ENCODE measurements at regions of chr2 and their contacts with region 1.

Region 1: GRCh38 chr2:202172439-202173211 is 65.8 kb downstream of the SUMO1 start:
- DNase-seq: no peak
- ATAC-seq: no peak
- H3K4me3 ChIP-seq: no peak overlapping the region
- H3K27ac ChIP-seq: no peak overlapping the region
- H3K4me1 ChIP-seq: no peaks in the 10 kb centered on the region
- H3K27me3 ChIP-seq: no peaks in the 10 kb centered on the region

Region 2: DNA sequence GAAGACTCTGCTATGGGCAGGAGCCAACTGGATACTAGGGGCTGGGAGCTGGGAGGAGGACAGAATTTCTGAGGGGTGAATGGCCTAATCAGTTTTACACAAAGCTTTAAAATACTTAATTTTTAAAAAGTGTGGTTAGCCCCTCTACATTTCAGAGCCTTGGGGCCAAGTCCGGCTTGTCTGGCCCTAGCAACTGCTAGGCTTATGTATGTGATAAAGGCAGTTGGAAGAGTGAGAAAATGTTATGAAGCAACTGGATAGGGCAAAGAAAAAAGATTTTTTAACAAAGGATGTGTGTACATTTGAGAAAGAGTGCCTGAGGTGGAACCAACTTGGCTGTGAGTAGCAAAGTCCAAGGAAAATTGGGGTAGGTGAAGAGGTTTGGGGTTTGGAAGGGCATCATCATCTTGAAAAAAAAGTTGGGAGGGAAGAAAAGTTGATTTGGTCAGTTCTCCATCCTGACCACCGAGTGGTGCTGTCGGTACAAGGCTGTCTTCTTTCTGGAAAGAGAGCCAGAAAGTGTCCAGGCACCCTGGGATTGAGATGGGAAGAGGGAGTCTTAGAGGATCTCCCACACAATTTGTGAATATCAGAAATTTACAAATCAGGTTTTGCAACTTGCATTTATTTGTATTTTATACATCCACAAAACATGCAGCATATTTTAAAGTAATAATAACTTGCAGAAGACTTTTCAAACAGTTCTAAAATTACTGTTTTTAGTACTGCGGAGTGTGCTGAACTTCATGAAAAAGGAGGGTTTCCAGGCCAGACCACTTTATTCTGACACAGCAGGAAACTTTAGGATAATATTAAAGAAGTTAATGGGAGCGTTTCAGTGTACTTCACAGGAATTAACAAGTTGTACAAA is 376.8 kb before region 1 on chr2:
- intact Hi-C with region 1: loop called in 3 of 4 experiments (anchors 5 to 10 kb)
- DNase-seq: peak in 1 of 3 donors; percentile 37
- ATAC-seq: peak; percentile 40 to 51
- H3K4me3 ChIP-seq: no peak overlapping the region
- H3K27ac ChIP-seq: no peak overlapping the region
- H3K4me1 ChIP-seq: no peaks in the 10 kb centered on the region
- H3K27me3 ChIP-seq: no peaks in the 10 kb centered on the region

Region 3: DNA sequence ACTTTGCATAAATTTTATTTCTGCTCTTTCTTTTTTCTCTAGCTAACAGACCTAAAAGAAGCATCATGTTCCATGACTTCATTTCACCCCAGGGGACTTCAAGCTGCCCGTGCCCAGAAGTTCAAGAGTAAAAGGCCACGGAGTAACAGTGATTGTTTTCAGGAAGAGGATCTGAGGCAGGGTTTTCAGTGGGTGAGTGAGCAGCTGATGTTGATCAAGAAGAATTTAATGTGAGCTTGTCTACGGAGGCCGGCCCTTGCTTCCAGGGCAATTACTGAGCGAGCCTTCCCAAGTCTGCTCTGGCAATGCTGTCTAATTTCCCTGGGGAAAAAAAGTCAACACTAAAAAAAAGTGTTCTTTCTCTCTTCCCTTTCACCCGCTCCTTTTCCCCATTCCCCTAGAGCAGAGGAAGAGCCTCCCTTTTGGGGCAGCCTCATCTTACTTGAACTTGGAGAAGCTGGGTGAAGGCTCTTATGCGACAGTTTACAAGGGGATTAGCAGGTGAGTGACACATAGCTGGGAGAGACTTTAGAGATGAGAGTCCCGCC is 365.1 kb before region 1 on chr2:
- intact Hi-C with region 1: loop called in 1 of 4 experiments (anchors 5 kb)
- DNase-seq: peak; percentile 49 to 74 (median 61)
- ATAC-seq: peak; percentile 90 to 92
- H3K4me3 ChIP-seq: no peak overlapping the region
- H3K27ac ChIP-seq: peak overlapping the region; percentile 64
- H3K4me1 ChIP-seq: no peaks in the 10 kb centered on the region
- H3K27me3 ChIP-seq: no peaks in the 10 kb centered on the region

Region 4: DNA sequence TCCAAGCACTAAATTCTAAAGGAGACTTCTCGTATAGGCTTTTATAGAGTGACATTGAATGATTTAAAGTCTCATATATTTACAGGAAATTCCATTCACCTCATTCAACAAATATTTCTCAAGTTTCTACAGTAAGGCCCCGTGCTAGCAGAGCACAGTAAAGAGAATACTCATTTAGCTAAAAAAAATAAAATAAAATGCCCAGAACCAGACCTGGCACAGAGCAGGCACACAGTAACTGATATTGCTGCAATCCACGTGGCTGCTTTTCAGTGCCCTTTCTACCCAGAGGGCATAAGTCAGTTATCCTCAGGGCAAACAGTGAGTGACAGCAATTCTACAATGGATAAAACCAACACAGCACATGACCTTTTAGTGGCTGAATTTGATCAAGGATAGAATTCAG is 13.2 kb after region 1 on chr2:
- intact Hi-C with region 1: loop called in 1 of 4 experiments (anchors 2 kb)
- DNase-seq: no peak
- ATAC-seq: no peak
- H3K4me3 ChIP-seq: no peak overlapping the region
- H3K27ac ChIP-seq: no peak overlapping the region
- H3K4me1 ChIP-seq: no peaks in the 10 kb centered on the region
- H3K27me3 ChIP-seq: no peaks in the 10 kb centered on the region

Region 5: DNA sequence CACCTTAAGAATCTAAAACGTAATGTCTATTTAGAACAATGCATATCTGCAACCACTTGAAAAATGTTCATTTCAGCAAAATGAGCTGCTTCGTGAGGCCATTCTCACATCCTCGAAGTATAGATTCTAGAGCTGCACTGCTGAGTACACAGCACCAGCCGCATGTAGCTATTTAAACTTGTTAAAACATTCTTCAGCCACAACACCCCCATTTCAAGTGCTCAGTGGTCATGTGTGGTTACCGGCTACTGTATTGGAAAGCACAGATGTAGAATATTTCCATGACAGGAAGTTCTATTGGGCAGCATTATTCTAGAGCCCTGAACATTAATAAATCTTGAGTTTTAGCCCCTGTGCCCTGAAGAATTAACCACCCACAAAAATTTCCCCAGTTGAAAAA is 30.7 kb after region 1 on chr2:
- intact Hi-C with region 1: no loop called
- DNase-seq: no peak
- ATAC-seq: no peak
- H3K4me3 ChIP-seq: no peak overlapping the region
- H3K27ac ChIP-seq: no peak overlapping the region
- H3K4me1 ChIP-seq: no peaks in the 10 kb centered on the region
- H3K27me3 ChIP-seq: no peaks in the 10 kb centered on the region